Posterior vena cava (tissue), 2 donors: ENCODE measurements at regions of chr14 and their contacts with region 1.

Region 1: DNA sequence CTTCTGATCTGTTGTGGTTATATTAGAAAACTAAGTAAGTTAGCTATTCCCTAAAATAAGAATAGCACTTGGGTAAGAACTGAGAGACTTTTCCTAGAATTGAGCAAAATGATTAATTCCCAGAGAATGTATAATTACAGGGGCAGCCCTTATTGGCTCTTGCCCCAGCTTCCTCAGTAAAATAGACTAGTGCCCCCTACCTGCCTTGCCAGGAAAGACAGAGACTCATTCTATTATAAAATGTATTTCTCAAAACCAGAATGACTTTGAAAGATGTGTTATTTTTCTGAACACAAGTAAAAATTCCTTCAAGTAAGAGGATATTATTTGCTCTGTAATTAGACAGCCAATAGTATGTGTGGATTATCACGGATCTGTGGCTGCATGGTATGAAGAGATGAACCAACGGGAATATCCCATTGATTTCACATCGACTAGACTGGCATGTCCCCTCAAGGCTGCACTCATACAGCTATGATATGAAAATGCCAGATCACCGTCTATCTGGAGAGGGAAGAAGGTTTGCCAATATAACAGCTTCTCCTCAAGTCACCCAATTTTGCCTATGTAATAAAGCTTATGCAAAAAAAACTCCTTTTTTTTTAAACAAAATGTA is 7.4 kb upstream of the GLRX5 start:
- DNase-seq: no peak

Region 2: DNA sequence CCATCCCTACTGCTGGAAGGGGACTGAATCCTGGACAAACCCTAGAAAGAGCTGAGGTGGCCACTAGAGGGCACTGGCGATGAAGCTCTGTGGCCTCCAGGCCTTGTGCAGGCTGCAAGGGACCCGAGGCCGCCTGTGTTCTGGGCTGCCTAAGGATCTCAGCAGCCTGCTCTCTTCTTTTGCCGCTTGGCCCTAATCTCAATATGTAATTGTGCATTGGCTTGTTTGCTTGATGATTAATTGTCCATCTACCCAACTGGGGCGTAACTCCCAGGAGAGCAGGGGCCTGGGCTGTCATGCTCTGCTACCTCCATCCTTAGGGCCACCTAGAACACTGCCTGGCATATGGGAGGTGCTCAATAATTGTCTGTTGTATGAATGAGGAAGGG is 84.9 kb before region 1 on chr14:
- intact Hi-C with region 1: loop called (anchors 2 to 5 kb)
- DNase-seq: peak; percentile 95

Region 3: GRCh38 chr14:95564060-95564459 is 36.6 kb after region 1 on chr14:
- intact Hi-C with region 1: no loop called
- DNase-seq: no peak